ENCODE measurements at regions of chr11 and their contacts with region 1.

Region 1: DNA sequence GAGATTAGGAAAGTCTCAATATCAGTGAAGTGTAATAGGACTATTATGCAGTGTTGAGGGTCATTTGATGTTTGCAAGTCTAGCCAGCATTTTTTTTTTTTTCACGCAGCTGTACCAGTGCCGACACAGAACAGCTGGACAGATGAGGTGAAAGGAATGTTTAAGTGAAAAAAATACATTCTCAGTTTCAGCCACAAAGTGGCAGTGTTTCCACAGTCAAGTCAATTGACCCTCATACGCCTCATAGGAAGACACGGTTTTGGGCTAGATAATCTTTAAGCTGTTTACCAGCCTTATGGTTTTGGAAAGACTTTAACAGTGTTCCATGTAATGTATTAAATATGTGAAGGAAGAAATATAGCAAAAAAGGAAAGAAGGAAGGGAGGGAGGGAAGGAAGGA is 349.9 kb upstream of the ANO3 start:
- DNase-seq: peak; percentile 51
- H3K4me3 Mint-ChIP-seq: no peak overlapping the region
- H3K27ac Mint-ChIP-seq: no peak overlapping the region
- H3K4me1 Mint-ChIP-seq: no peaks in the 10 kb centered on the region
- H3K27me3 Mint-ChIP-seq: peaks cover 93% of the 10 kb centered on the region
- CTCF ChIP-seq: peak; percentile 56

Region 2: DNA sequence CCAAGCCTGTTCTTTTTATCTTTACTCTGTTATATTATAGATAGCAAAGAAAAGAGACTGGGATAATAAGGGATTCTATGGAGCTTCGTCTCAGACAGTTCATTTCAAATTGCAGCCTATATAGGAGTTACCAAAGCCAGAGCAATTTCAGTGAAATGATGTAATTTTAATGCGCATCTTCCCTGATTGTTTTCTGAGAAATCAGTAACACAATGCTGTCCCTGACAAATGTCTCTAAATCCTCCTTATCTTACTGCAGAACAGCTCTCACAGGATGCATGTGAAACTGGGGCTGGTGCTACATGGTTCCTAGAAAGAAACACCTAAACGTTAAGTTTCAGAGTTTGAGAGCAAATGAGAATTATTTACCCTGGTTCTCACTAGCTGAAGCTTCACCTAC is 118.0 kb before region 1 on chr11:
- CTCF ChIA-PET with region 1: no interaction called
- POLR2A ChIA-PET with region 1: no interaction called
- intact Hi-C with region 1: no loop called
- DNase-seq: no peak
- H3K4me3 Mint-ChIP-seq: no peak overlapping the region
- H3K27ac Mint-ChIP-seq: no peak overlapping the region
- H3K4me1 Mint-ChIP-seq: no peaks in the 10 kb centered on the region
- H3K27me3 Mint-ChIP-seq: peaks cover 22% of the 10 kb centered on the region
- CTCF ChIP-seq: no peak

Region 3: DNA sequence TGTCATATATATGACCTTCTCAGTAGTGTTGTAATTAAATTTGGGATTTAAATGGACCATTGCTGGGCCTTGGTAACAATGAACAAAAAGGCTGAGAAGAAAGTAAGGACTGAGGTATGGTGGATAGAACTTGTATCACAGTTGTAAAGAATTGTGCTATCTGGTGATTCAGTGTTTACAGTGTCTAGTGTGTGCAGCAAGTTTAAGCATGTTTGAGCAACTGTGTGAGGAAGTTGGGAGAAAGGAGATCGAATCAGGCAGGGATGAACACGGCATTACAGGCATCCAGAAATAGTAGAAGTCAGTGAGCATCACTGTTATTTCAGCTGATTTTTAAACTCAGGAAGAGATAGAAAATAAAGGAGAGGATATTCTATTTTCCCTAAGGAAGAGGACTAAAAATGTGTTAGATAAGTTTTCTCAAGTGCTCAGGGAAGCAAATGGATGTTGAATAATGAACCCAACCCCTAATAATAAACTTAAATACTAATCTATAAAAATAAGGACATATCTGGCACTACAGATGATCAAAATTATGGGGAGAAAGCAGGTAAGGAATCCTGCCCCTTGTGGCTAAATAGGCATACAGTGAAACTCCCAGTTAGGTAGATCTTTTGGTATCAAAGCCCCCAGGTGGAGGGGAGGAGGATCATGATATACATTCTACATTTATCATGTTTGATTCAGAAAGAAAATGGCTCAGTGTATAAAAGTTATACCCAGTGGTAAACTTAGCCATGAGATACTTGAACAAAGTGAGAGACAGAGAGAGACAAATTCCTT is 11.1 kb before region 1 on chr11:
- CTCF ChIA-PET with region 1: interaction called, 29 read pairs
- POLR2A ChIA-PET with region 1: no interaction called
- intact Hi-C with region 1: no loop called
- DNase-seq: peak; percentile 10
- H3K4me3 Mint-ChIP-seq: no peak overlapping the region
- H3K27ac Mint-ChIP-seq: no peak overlapping the region
- H3K4me1 Mint-ChIP-seq: peaks cover 6% of the 10 kb centered on the region
- H3K27me3 Mint-ChIP-seq: peaks cover 4% of the 10 kb centered on the region
- CTCF ChIP-seq: peak; percentile 33

Region 4: GRCh38 chr11:25992294-25992693 is 10.3 kb after region 1 on chr11:
- CTCF ChIA-PET with region 1: interaction called, 21 read pairs
- POLR2A ChIA-PET with region 1: interaction called, 3 read pairs
- intact Hi-C with region 1: no loop called
- DNase-seq: no peak
- H3K4me3 Mint-ChIP-seq: no peak overlapping the region
- H3K27ac Mint-ChIP-seq: no peak overlapping the region
- H3K4me1 Mint-ChIP-seq: no peaks in the 10 kb centered on the region
- H3K27me3 Mint-ChIP-seq: peaks cover 94% of the 10 kb centered on the region
- CTCF ChIP-seq: no peak

Region 5: DNA sequence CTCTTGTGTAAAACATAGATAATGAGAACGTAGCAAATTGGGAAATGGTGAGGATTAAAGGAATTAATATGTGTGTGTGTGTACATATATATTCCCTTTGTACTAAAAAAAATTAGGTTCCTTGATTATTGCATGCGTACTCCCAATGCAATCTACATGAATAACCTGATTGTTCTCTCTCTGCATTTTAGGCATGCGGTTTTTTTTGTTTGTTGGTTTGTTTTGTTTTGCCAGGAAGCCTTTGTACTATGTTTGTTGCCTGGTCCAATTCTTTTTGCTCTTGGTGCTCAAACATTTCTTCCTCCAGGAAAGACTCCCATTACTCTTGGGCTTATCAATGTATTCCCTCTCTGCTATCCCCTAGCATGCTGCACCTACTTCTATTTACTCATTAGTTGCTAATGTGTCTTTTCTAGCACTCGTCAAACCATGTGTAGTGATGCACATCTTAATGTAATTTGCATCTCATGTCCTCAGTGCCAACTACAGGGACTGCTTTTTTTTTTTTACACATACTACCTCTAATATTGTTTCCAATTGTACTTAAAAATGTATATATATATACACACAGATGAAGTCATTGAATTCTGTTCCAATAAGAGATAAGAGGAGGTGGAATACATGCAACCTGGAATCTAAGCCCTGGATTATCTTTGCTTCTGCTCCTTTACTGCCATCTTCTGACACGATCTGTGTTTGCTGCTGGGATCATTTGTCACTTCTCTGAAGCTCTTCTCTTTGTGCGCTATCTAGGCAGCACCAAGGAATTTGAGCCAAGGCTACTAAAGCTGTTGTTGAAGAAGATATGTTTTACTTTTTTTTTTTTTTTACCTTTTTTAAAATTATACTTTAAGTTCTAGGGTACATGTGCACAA is 152.7 kb after region 1 on chr11:
- CTCF ChIA-PET with region 1: interaction called, 30 read pairs
- POLR2A ChIA-PET with region 1: no interaction called
- intact Hi-C with region 1: loop called (anchors 2 kb)
- DNase-seq: peak; percentile 11
- H3K4me3 Mint-ChIP-seq: no peak overlapping the region
- H3K27ac Mint-ChIP-seq: no peak overlapping the region
- H3K4me1 Mint-ChIP-seq: no peaks in the 10 kb centered on the region
- H3K27me3 Mint-ChIP-seq: peaks cover 67% of the 10 kb centered on the region
- CTCF ChIP-seq: peak; percentile 8

Region 6: GRCh38 chr11:26227296-26227695 is 245.3 kb after region 1 on chr11:
- CTCF ChIA-PET with region 1: interaction called, 34 read pairs
- POLR2A ChIA-PET with region 1: no interaction called
- intact Hi-C with region 1: loop called (anchors 1 kb)
- DNase-seq: peak; percentile 78
- H3K4me3 Mint-ChIP-seq: no peak overlapping the region
- H3K27ac Mint-ChIP-seq: no peak overlapping the region
- H3K4me1 Mint-ChIP-seq: peaks cover 11% of the 10 kb centered on the region
- H3K27me3 Mint-ChIP-seq: no peaks in the 10 kb centered on the region
- CTCF ChIP-seq: peak; percentile 53

Region 7: DNA sequence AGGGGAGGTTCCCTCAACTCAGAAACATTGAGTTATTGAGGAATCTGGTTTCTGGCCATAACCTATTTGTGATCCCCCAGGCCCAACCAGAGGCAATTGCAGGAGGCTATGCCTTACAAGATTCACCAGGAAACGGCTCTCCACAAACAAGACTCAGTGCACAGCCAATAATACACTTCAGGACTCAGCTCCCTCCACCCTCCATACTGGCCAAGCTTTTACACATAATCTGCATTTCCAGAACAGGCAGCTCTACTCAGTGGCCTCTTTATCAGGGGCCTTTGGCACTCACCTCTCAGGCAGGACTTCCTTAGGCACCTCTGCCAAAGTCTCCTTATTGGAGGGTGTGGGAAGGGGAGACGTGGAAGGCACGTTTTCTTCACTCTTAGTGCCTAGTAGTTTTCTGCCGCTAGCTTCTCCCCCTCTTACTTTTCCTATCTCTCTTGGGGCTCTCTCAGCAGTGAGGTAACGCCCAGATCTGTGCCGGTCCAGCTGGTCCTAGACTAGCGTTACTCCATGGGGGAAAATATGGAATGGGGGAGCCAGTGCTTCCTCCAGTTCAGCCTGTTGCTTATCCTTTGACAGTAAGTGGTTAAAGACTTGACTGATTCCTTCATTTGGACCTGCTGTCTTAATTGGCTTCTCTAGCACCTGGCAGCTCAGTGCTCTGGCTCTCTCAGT is 287.1 kb after region 1 on chr11:
- CTCF ChIA-PET with region 1: interaction called, 12 read pairs
- POLR2A ChIA-PET with region 1: no interaction called
- intact Hi-C with region 1: no loop called
- DNase-seq: no peak
- H3K4me3 Mint-ChIP-seq: no peak overlapping the region
- H3K27ac Mint-ChIP-seq: no peak overlapping the region
- H3K4me1 Mint-ChIP-seq: no peaks in the 10 kb centered on the region
- H3K27me3 Mint-ChIP-seq: peaks cover 79% of the 10 kb centered on the region
- CTCF ChIP-seq: no peak

Region 8: GRCh38 chr11:26276798-26277424 is 294.9 kb after region 1 on chr11:
- CTCF ChIA-PET with region 1: interaction called, 14 read pairs
- POLR2A ChIA-PET with region 1: no interaction called
- intact Hi-C with region 1: loop called (anchors 1 kb)
- DNase-seq: peak; percentile 66
- H3K4me3 Mint-ChIP-seq: no peak overlapping the region
- H3K27ac Mint-ChIP-seq: no peak overlapping the region
- H3K4me1 Mint-ChIP-seq: no peaks in the 10 kb centered on the region
- H3K27me3 Mint-ChIP-seq: peaks cover 72% of the 10 kb centered on the region
- CTCF ChIP-seq: peak; percentile 93